ENCODE measurements at regions of chr2 and their contacts with region 1.

Region 1: DNA sequence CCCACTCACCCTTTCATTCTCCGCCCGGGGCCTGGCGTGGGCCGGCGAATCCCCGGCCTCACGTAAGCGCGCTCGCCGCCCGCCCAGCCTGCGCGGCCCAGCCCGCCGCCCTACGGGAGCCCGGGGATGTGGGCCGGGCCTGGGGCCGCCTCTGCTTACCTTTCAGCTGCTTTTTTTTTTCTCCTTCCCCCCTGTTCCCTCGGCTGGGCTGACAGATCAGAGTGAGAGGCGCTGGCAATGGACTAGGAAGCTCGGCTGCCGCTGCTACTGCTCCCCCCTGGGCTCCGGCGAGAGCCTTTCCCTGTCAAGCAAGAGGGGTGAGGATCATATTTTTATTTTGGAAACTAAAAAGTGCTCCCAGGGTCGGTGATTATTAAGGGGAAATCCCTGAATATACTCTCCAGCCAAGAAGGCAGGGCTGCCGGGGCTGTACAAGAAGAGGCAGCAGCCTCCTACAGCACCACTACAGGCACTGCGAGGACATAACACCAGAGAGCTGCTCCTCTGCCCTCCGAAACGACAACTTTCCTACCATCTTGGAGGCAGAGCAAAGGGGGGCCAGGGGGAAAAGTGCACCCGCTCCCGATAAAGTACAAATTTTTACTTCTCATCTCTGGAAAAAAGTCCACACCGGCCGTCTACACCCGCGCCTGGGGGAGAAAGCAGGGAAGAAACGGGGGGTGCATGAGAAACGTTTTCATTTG is at the start of gene INO80D:
- DNase-seq: peak; percentile 65 to 94 (median 81)
- ATAC-seq: peak; percentile 91 to 95
- H3K4me3 Mint-ChIP-seq: peak within 1 kb of the TSS; percentile 97 to 100 (median 99)
- H3K27ac Mint-ChIP-seq: peak within 1 kb of the TSS; percentile 98 to 100 (median 100)
- H3K4me1 Mint-ChIP-seq: peaks cover 20 to 59% (median 39%) of the 10 kb centered on the region in 4 donors
- H3K27me3 Mint-ChIP-seq: no peaks in the 10 kb centered on the region
- polyA plus RNA-seq, gene INO80D: 9.4 to 13.1 (median 11.6) TPM

Region 2: DNA sequence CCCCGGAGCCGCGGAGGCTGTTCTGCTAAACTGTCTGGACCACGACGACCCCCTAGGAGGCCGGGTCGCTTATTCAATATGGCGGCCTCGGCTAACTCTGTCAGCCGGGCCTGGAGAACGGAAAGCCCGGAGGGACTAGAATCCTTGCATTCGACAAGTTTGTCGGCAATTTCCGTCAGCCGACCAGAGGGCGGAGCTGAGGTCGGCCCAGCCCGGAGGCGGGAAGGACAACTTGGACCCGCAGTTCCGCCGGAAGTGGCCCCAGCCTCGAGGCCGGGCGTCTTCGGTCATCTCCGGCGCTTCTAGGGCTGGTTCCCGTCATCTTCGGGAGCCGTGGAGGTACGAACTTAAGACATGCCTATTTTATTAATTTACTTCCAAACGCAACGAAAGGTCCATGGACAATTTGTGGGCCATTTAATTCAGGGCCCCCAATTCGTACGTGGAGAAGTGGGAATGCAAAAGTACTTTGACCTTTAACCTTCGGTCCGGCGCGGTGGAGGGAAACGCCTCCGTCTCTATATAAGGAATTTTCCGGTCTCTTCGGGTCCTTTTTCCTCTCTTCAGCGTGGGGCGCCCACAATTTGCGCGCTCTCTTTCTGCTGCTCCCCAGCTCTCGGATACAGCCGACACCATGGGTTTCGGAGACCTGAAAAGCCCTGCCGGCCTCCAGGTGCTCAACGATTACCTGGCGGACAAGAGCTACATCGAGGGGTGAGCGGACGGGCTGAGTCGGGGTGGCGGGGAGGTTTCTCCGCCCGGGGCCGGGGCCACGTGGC is 73.6 kb after region 1 on chr2 and contains the starts of genes EEF1B2 and NDUFS1:
- POLR2A ChIA-PET with region 1: interaction called, 26 read pairs
- DNase-seq: peak; percentile 92 to 98 (median 97)
- ATAC-seq: peak; percentile 85
- H3K4me3 Mint-ChIP-seq: peak within 1 kb of the TSS; percentile 97 to 100 (median 99)
- H3K27ac Mint-ChIP-seq: peak within 1 kb of the TSS; percentile 97 to 100 (median 99)
- H3K4me1 Mint-ChIP-seq: peaks cover 22 to 72% (median 67%) of the 10 kb centered on the region in 4 donors
- H3K27me3 Mint-ChIP-seq: no peaks in the 10 kb centered on the region
- polyA plus RNA-seq, gene EEF1B2: 1,324 to 1,693 (median 1,438) TPM
- polyA plus RNA-seq, gene NDUFS1: 34.3 to 45.9 (median 45.3) TPM